ENCODE measurements at regions of chr11 and their contacts with region 1.

Region 1: GRCh38 chr11:63508009-63508408 is 2.1 kb downstream of the LGALS12 start:
- DNase-seq: peak; percentile 41 to 49
- ATAC-seq: peak; percentile 27 to 39
- H3K4me3 ChIP-seq: no peak overlapping the region
- H3K27ac ChIP-seq: no peak overlapping the region
- H3K4me1 ChIP-seq: peaks cover 37 to 46% of the 10 kb centered on the region in 2 donors
- H3K27me3 ChIP-seq: no peaks in the 10 kb centered on the region
- CTCF ChIP-seq: peak in 3 of 5 experiments; percentile 25 to 51 (median 42)
- POLR2A ChIP-seq: no peak

Region 2: GRCh38 chr11:62984246-62985017 is 523.6 kb before region 1 on chr11 and contains the start of gene SLC22A6:
- in situ Hi-C with region 1: no loop called
- intact Hi-C with region 1: no loop called
- DNase-seq: no peak
- ATAC-seq: no peak
- H3K4me3 ChIP-seq: no peak within 1 kb of the TSS
- H3K27ac ChIP-seq: no peak within 1 kb of the TSS
- H3K4me1 ChIP-seq: no peaks in the 10 kb centered on the region
- H3K27me3 ChIP-seq: no peaks in the 10 kb centered on the region
- CTCF ChIP-seq: no peak
- POLR2A ChIP-seq: no peak
- total RNA-seq, gene SLC22A6: not detected

Region 3: DNA sequence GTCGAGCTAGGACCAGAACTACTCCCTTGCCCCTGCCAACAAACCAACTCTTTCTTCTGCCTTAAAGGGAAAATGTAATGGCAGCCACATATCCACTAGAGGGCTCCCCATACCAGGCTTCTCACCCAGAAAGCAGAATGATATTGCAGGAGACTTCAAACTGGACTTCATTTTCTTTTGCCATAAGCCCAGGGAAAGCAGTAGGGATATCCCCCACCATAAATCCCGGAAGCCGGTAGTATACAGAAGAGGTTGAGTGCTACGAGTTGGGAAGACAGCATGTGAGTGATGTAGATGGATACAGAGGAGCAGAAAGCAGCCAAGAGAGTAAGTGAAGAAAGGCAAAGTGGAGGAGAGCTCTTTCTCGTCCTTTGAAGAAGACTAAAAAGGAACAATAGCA is 29.1 kb before region 1 on chr11:
- in situ Hi-C with region 1: no loop called
- intact Hi-C with region 1: loop called (anchors 2 kb)
- DNase-seq: peak; percentile 18 to 41
- ATAC-seq: peak; percentile 85 to 90
- H3K4me3 ChIP-seq: no peak overlapping the region
- H3K27ac ChIP-seq: no peak overlapping the region
- H3K4me1 ChIP-seq: no peaks in the 10 kb centered on the region
- H3K27me3 ChIP-seq: no peaks in the 10 kb centered on the region
- CTCF ChIP-seq: peak; percentile 80 to 92 (median 86)
- POLR2A ChIP-seq: no peak

Region 4: DNA sequence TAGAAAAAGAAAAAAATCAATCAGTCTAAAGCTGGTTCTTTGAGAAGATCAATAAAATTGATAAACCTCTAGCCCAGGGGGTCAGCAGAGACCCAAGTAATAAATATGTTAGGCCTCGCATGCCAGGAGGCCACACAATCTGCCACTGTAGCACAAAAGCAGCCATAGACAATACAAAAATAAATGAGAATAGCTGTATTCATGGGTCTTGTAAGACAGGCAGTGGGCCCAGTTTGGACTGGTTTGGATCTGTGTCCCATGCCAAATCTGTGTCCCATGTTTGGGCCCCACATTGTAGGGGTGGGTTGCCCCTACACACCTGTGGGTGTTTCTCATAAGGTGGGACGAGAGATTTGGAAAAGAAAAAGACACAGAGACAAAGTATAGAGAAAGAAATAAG is 22.0 kb after region 1 on chr11:
- in situ Hi-C with region 1: no loop called
- intact Hi-C with region 1: loop called (anchors 1 kb)
- DNase-seq: no peak
- ATAC-seq: no peak
- H3K4me3 ChIP-seq: no peak overlapping the region
- H3K27ac ChIP-seq: no peak overlapping the region
- H3K4me1 ChIP-seq: no peaks in the 10 kb centered on the region
- H3K27me3 ChIP-seq: no peaks in the 10 kb centered on the region
- CTCF ChIP-seq: no peak
- POLR2A ChIP-seq: no peak

Region 5: DNA sequence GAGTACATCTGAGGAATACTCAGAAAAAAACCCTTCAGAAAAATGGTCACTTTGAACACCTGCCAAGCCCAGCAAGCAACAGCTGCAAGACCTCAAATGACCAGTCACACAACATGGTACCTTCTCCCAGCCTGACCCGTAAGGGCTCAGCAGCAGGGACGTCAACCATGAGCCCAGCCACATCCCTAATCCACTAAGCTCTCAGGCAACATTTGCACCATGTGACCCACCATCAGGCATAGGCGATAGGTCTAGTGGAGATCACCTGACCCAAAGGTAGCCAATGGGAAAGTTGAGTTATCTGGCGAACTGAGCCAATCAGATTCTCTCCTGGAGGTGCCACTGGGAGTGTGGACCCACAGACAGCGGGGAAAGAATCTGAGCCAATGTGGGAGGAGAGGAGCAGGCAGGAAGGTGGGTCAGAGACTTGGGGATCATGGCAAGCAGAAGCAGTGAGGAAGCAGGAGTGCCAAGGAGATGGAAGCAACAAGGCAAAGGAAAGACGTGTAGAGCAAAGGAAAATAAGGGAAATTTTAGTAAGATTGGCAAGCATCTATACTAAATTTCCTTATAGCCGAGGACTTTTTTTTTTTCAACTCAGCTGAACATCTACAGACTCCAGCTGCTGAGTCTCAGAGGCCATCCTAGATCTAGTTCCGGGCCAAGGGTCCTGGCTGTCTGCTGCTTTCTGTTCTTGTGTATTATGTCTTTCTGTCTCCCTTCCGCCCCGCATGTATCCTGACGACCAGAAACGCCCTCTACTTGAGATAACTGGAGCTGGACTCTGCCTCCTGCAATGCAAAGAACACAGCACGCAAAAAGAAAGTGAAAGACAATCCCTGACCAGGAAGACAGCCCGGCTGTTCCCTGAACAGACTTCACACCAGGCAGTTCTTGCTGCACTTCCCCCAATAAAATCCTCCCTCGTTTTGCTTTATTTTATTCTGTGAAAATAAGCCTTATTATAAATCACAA is 66.2 kb after region 1 on chr11:
- in situ Hi-C with region 1: no loop called
- intact Hi-C with region 1: loop called (anchors 2 kb)
- DNase-seq: peak; percentile 34 to 68
- ATAC-seq: peak; percentile 87 to 89
- H3K4me3 ChIP-seq: peak overlapping the region; percentile 30 to 56 (median 48)
- H3K27ac ChIP-seq: peak overlapping the region; percentile 66 to 91 (median 82)
- H3K4me1 ChIP-seq: peaks cover 26 to 30% of the 10 kb centered on the region in 2 donors
- H3K27me3 ChIP-seq: no peaks in the 10 kb centered on the region
- CTCF ChIP-seq: peak in 2 of 5 experiments; percentile 16 to 17
- POLR2A ChIP-seq: no peak